ENCODE measurements at regions of chr19 and their contacts with region 1.

Region 1: DNA sequence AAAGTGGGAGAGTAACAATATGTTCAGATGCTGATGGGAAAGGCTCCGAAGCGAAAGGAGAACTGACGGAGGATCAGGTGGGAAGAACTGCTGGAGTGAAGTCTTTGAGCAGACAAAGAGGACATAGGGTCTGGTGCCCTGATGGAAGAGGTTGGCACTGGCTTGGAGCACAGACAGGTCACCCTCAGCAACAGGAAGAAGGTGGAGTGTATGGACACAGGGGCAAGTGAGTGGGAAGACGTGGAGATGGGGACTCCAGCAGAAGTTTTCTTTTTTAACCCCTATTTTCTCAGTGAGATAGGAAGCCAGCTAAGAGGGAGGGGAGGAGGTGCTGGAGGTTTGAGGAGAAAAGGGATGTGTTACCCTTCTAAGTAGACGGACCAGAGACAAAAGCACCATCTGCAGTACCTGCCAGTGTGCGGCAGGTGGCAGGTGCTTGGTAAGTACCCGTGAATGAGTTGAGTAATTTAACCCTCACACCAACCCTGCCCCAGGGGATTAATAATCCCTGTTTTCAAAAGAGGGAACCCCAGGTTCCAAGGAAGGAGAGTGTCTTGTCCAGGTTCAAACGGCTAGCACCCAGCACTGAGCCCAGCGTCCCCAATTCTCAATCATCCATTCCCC is 11.2 kb downstream of the HAS1 start:
- DNase-seq: peak; percentile 38 to 64
- H3K4me3 ChIP-seq: no peak overlapping the region
- H3K27ac ChIP-seq: no peak overlapping the region
- H3K4me1 ChIP-seq: no peaks in the 10 kb centered on the region
- H3K27me3 ChIP-seq: peaks cover 41% of the 10 kb centered on the region
- CTCF ChIP-seq: peak; percentile 82

Region 2: GRCh38 chr19:51726049-51726448 is 13.5 kb after region 1 on chr19:
- CTCF ChIA-PET with region 1: no interaction called
- POLR2A ChIA-PET with region 1: interaction called, 32 read pairs
- intact Hi-C with region 1: no loop called
- DNase-seq: no peak
- H3K4me3 ChIP-seq: no peak overlapping the region
- H3K27ac ChIP-seq: no peak overlapping the region
- H3K4me1 ChIP-seq: no peaks in the 10 kb centered on the region
- H3K27me3 ChIP-seq: peaks cover 88% of the 10 kb centered on the region
- CTCF ChIP-seq: no peak

Region 3: DNA sequence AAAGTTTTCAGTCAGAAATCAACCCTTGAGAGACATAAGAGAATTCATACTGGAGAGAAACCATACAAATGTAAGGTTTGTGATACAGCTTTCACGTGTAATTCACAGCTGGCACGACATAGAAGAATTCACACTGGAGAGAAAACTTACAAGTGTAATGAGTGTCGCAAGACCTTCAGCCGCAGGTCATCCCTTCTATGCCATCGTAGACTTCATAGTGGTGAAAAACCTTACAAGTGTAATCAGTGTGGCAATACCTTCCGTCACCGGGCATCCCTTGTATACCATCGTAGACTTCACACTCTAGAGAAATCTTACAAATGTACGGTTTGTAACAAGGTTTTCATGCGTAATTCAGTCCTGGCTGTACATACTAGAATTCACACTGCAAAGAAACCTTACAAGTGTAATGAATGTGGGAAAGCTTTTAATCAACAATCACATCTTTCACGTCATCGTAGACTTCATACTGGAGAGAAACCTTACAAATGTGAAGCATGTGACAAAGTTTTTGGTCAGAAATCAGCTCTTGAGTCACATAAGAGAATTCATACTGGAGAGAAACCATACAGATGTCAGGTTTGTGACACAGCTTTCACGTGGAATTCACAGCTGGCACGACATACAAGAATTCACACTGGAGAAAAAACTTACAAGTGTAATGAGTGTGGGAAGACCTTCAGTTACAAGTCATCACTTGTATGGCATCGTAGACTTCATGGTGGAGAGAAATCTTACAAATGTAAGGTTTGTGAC is 841.8 kb after region 1 on chr19:
- CTCF ChIA-PET with region 1: no interaction called
- POLR2A ChIA-PET with region 1: interaction called, 13 read pairs
- intact Hi-C with region 1: no loop called
- DNase-seq: no peak
- H3K4me3 ChIP-seq: 0 out of 2 replicates have a peak overlapping the region, but pooled peaks have one; percentile 28
- H3K27ac ChIP-seq: no peak overlapping the region
- H3K4me1 ChIP-seq: no peaks in the 10 kb centered on the region
- H3K27me3 ChIP-seq: no peaks in the 10 kb centered on the region
- CTCF ChIP-seq: no peak

Measured in PC-9 (cell line).